Calu3 (cell line): ENCODE measurements at regions of chr2 and their contacts with region 1.

Region 1: GRCh38 chr2:59968441-59968840 is 585.0 kb downstream of the BCL11A start:
- DNase-seq: no peak
- H3K4me3 Mint-ChIP-seq: no peak overlapping the region
- H3K27ac Mint-ChIP-seq: no peak overlapping the region
- H3K4me1 Mint-ChIP-seq: no peaks in the 10 kb centered on the region
- H3K27me3 Mint-ChIP-seq: peaks cover 16% of the 10 kb centered on the region
- CTCF ChIP-seq: no peak

Region 2: GRCh38 chr2:59986511-59986910 is 18.1 kb after region 1 on chr2:
- CTCF ChIA-PET with region 1: no interaction called
- intact Hi-C with region 1: loop called (anchors 1 kb)
- DNase-seq: no peak
- H3K4me3 Mint-ChIP-seq: no peak overlapping the region
- H3K27ac Mint-ChIP-seq: no peak overlapping the region
- H3K4me1 Mint-ChIP-seq: no peaks in the 10 kb centered on the region
- H3K27me3 Mint-ChIP-seq: no peaks in the 10 kb centered on the region
- CTCF ChIP-seq: no peak